ENCODE measurements at regions of chr3 and their contacts with region 1.

Region 1: GRCh38 chr3:171829841-171830517 is 13.2 kb upstream of the TMEM212 start:
- DNase-seq: no peak
- ATAC-seq: peak; percentile 85
- H3K4me3 ChIP-seq: no peak overlapping the region
- H3K27ac ChIP-seq: no peak overlapping the region
- H3K4me1 ChIP-seq: no peaks in the 10 kb centered on the region
- H3K27me3 ChIP-seq: no peaks in the 10 kb centered on the region; a peak in 1 of 4 replicates
- CTCF ChIP-seq: peak; percentile 52 to 80 (median 74)
- EP300 ChIP-seq: no peak
- POLR2A ChIP-seq: no peak
- RAD21 ChIP-seq: peak; percentile 53

Region 2: GRCh38 chr3:171566803-171567422 is 263.1 kb before region 1 on chr3:
- CTCF ChIA-PET with region 1: interaction called, 16 read pairs
- POLR2A ChIA-PET with region 1: no interaction called
- RAD21 ChIA-PET with region 1: interaction called, 17 read pairs
- SMC1A ChIA-PET with region 1: interaction called, 14 read pairs
- in situ Hi-C with region 1: no loop called
- intact Hi-C with region 1: loop called (anchors 5 kb)
- DNase-seq: peak; percentile 42
- ATAC-seq: peak; percentile 81
- H3K4me3 ChIP-seq: no peak overlapping the region
- H3K27ac ChIP-seq: no peak overlapping the region
- H3K4me1 ChIP-seq: peaks cover 3% of the 10 kb centered on the region; the same call in 1 of the 2 replicates
- H3K27me3 ChIP-seq: no peaks in the 10 kb centered on the region
- CTCF ChIP-seq: peak; percentile 46 to 86 (median 63); a peak in 5 of 6 replicates
- EP300 ChIP-seq: no peak
- POLR2A ChIP-seq: no peak
- RAD21 ChIP-seq: peak; percentile 95

Region 3: DNA sequence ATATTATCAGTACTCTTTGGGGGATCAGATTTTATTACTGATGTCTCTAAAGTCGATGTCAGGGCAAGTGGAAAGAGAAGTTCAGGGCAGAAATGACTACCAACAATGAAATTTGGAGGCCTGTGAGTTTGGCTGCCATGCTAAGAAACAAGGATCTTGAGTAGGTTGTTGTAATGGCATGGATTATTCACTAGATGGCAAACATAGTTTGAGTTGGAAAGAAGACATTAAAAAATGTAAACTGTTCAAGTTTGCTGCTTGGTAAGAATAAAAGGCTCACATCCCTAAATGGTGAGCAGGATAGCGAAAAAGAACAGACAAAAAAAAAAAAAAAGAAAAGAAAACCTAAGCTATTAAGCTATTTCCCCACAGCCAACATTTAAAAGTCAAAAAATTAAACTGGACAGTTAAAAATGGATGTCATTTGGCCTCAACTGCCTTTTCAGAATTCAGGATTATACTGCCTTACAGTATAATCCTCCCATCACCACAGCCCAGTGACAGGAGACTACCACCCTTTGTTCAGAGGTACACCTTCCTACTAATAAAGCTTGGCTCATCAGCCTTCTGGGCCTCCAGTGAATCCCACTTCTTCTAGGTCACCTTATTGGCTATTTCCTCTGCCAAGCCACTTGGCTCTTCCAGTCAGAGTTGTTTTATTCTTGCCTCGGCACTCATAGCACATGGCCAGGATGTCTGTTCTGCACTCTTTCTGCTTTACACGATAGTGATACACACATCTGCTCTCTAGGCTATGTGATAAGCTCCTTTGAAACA is 183.4 kb before region 1 on chr3:
- CTCF ChIA-PET with region 1: interaction called, 41 read pairs
- POLR2A ChIA-PET with region 1: interaction called, 5 read pairs
- RAD21 ChIA-PET with region 1: interaction called, 34 read pairs
- SMC1A ChIA-PET with region 1: interaction called, 44 read pairs
- in situ Hi-C with region 1: loop called (anchors 5 kb)
- intact Hi-C with region 1: loop called (anchors 1 kb)
- DNase-seq: no peak
- ATAC-seq: peak; percentile 70
- H3K4me3 ChIP-seq: no peak overlapping the region
- H3K27ac ChIP-seq: no peak overlapping the region
- H3K4me1 ChIP-seq: no peaks in the 10 kb centered on the region
- H3K27me3 ChIP-seq: no peaks in the 10 kb centered on the region
- CTCF ChIP-seq: peak; percentile 44 to 67 (median 55)
- EP300 ChIP-seq: no peak
- POLR2A ChIP-seq: no peak
- RAD21 ChIP-seq: peak; percentile 80

Region 4: DNA sequence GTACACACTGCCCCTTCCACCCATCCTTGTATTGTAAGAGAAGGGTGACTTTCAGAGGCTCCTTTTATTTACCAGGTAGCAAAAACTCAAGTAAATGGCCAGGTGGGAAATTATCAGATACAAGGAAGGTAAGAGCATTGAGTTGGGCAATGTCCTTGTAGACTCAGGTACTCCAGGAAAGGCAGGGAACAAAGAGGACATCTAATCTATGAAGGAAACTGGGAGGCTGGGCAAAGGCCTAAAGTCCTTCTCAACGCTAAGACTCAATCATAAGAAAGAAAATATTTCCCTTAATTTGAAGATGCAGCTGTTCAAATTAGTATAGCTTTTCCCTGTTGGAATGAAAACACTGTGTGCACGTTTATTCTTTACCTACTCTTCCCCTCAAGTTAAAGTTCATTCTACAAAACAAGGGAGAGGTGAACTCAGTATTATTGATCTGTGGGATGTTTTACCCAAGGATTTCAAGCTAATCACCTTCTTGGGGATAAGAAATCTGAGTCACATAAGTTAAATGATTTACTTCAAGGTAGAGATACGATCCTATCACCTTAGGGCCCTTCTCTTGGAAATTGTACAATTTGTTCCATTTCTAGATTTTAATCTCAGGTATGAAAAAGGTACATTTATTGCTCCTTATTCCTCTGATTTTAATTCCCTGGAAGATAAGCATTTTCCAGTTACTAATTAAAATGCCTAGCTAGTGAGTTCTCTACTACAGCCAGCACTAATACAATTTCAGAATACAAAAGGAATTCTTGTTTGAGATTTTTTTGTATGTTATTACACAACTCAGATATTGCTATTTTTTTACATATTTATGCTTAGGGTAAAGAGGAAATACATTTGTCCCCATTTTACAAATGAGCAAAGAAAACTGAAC is 100.3 kb before region 1 on chr3:
- CTCF ChIA-PET with region 1: interaction called, 10 read pairs
- POLR2A ChIA-PET with region 1: no interaction called
- RAD21 ChIA-PET with region 1: interaction called, 4 read pairs
- SMC1A ChIA-PET with region 1: interaction called, 7 read pairs
- in situ Hi-C with region 1: no loop called
- intact Hi-C with region 1: no loop called
- DNase-seq: no peak
- ATAC-seq: no peak
- H3K4me3 ChIP-seq: no peak overlapping the region
- H3K27ac ChIP-seq: no peak overlapping the region
- H3K4me1 ChIP-seq: no peaks in the 10 kb centered on the region
- H3K27me3 ChIP-seq: no peaks in the 10 kb centered on the region
- CTCF ChIP-seq: no peak
- EP300 ChIP-seq: no peak
- POLR2A ChIP-seq: no peak
- RAD21 ChIP-seq: no peak

Region 5: DNA sequence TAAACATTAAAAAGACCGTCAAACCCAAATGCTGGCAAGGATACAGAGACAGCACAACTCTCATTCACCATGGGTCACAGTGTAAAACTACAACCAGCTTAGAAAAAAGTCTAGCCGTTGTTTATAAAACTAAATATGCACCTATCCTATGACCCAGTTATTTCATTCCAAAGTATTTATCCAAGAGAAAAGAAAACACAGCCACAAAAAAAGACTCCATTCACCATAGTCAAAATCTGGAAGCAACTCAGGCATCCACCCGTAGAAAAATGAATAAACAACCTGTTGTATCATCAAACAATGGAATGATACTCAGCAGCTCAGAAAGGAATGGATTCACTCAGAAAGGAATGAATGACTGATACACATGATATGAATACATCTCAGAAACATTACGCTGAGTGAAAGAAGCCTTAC is 48.3 kb before region 1 on chr3:
- CTCF ChIA-PET with region 1: interaction called, 274 read pairs
- POLR2A ChIA-PET with region 1: interaction called, 3 read pairs
- RAD21 ChIA-PET with region 1: interaction called, 333 read pairs
- SMC1A ChIA-PET with region 1: interaction called, 63 read pairs
- in situ Hi-C with region 1: no loop called
- intact Hi-C with region 1: no loop called
- DNase-seq: no peak
- ATAC-seq: no peak
- H3K4me3 ChIP-seq: no peak overlapping the region
- H3K27ac ChIP-seq: no peak overlapping the region
- H3K4me1 ChIP-seq: no peaks in the 10 kb centered on the region
- H3K27me3 ChIP-seq: no peaks in the 10 kb centered on the region
- CTCF ChIP-seq: no peak
- EP300 ChIP-seq: no peak
- POLR2A ChIP-seq: no peak
- RAD21 ChIP-seq: no peak

Region 6: GRCh38 chr3:171809821-171810628 is 20.0 kb before region 1 on chr3 and contains the start of gene PLD1:
- CTCF ChIA-PET with region 1: interaction called, 110 read pairs
- POLR2A ChIA-PET with region 1: interaction called, 24 read pairs
- RAD21 ChIA-PET with region 1: interaction called, 117 read pairs
- SMC1A ChIA-PET with region 1: interaction called, 151 read pairs
- in situ Hi-C with region 1: no loop called
- intact Hi-C with region 1: no loop called
- DNase-seq: no peak
- ATAC-seq: peak; percentile 72
- H3K4me3 ChIP-seq: peak within 1 kb of the TSS; percentile 69
- H3K27ac ChIP-seq: peak within 1 kb of the TSS; percentile 45
- H3K4me1 ChIP-seq: no peaks in the 10 kb centered on the region
- H3K27me3 ChIP-seq: no peaks in the 10 kb centered on the region
- CTCF ChIP-seq: 0 out of 6 replicates have a peak, but pooled peaks of 1 of the 3 experiments have one; percentile 5
- EP300 ChIP-seq: peak; percentile 6 to 12; a peak in 2 of 4 replicates
- POLR2A ChIP-seq: no peak
- RAD21 ChIP-seq: no peak
- polyA plus RNA-seq, gene PLD1: 3.1 to 3.4 TPM

Region 7: DNA sequence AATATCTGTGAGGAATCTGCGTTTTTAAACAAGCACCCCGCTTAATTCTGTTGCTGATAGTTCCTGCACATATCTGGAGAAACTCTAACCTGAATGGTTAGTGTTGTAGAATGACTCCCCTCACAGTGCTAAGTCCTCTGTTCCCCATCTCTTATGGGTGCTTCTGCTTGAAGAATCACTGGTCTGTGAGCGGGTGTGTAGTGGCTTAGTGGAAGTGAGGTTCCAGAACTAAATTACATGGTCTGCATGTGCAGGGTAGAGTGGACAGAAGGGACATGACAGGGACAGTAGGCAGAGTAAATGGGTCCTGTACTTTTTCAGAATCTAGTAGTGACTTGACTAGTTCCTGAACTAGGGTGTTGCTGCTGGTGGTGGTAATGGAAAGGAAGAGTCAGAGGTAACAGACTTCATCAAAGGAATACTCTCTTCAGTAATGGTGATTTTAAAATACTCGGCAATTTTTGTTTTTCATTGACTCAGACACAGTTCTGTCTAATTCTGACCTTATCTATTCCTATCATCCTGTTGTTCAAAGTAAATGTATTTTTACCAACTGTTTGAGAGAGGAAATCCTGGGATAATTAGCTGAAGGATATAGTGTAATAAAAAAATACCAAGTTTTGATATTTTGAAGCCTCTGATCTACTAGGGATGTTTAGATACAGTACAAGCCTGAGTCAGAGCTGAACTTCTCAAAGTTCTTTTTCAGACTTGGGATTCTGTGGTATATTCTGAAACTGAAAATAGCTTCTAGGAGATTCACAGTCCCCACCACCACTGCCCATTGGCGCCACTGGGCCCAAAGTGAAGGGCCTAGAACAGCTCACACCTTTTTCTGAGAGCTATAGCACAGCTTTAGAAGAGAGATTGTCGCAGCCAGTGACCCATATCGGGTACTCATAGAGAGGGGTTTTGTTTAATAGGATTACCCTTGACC is 264.9 kb after region 1 on chr3:
- CTCF ChIA-PET with region 1: no interaction called
- POLR2A ChIA-PET with region 1: no interaction called
- RAD21 ChIA-PET with region 1: no interaction called
- SMC1A ChIA-PET with region 1: no interaction called
- in situ Hi-C with region 1: no loop called
- intact Hi-C with region 1: no loop called
- DNase-seq: peak; percentile 62
- ATAC-seq: peak; percentile 96
- H3K4me3 ChIP-seq: no peak overlapping the region
- H3K27ac ChIP-seq: peak overlapping the region; percentile 54
- H3K4me1 ChIP-seq: peaks cover 35% of the 10 kb centered on the region
- H3K27me3 ChIP-seq: no peaks in the 10 kb centered on the region
- CTCF ChIP-seq: peak; percentile 8 to 31 (median 29); a peak in 4 of 6 replicates
- EP300 ChIP-seq: no peak; a peak in 1 of 4 replicates
- POLR2A ChIP-seq: no peak
- RAD21 ChIP-seq: peak; percentile 44

Measured in GM12878 (cell line).